ENCODE measurements at regions of chr10 and their contacts with region 1.

Region 1: GRCh38 chr10:63720072-63720537 is 198.9 kb downstream of the REEP3 start:
- DNase-seq: peak; percentile 60 to 85
- H3K4me3 ChIP-seq: no peak overlapping the region
- H3K27ac ChIP-seq: peak overlapping the region in 2 of 5 donors; percentile 43 to 83
- H3K4me1 ChIP-seq: peaks cover 8 to 44% (median 23%) of the 10 kb centered on the region in 4 donors
- H3K27me3 ChIP-seq: no peaks in the 10 kb centered on the region
- CTCF ChIP-seq: peak in 6 of 7 experiments; percentile 66 to 97 (median 96)
- EP300 ChIP-seq: no peak
- POLR2A ChIP-seq: no peak

Region 2: GRCh38 chr10:63166742-63167258 is 553.3 kb before region 1 on chr10:
- intact Hi-C with region 1: loop called (anchors 10 kb)
- DNase-seq: peak in 1 of 2 donors; percentile 92
- H3K4me3 ChIP-seq: no peak overlapping the region
- H3K27ac ChIP-seq: peak overlapping the region in 1 of 5 donors; percentile 47
- H3K4me1 ChIP-seq: peaks cover 0 to 49% (median 27%) of the 10 kb centered on the region in 4 donors
- H3K27me3 ChIP-seq: no peaks in the 10 kb centered on the region
- CTCF ChIP-seq: peak in 5 of 7 experiments; percentile 74 to 85 (median 84)
- EP300 ChIP-seq: no peak
- POLR2A ChIP-seq: no peak

Region 3: GRCh38 chr10:63217120-63217605 is 502.9 kb before region 1 on chr10:
- intact Hi-C with region 1: loop called (anchors 10 kb)
- DNase-seq: peak in 1 of 2 donors; percentile 69
- H3K4me3 ChIP-seq: no peak overlapping the region
- H3K27ac ChIP-seq: peak overlapping the region in 1 of 5 donors; percentile 3
- H3K4me1 ChIP-seq: peaks cover 7 to 53% (median 25%) of the 10 kb centered on the region in 4 donors
- H3K27me3 ChIP-seq: no peaks in the 10 kb centered on the region
- CTCF ChIP-seq: peak in 5 of 7 experiments; percentile 51 to 73 (median 57)
- EP300 ChIP-seq: no peak
- POLR2A ChIP-seq: no peak

Region 4: DNA sequence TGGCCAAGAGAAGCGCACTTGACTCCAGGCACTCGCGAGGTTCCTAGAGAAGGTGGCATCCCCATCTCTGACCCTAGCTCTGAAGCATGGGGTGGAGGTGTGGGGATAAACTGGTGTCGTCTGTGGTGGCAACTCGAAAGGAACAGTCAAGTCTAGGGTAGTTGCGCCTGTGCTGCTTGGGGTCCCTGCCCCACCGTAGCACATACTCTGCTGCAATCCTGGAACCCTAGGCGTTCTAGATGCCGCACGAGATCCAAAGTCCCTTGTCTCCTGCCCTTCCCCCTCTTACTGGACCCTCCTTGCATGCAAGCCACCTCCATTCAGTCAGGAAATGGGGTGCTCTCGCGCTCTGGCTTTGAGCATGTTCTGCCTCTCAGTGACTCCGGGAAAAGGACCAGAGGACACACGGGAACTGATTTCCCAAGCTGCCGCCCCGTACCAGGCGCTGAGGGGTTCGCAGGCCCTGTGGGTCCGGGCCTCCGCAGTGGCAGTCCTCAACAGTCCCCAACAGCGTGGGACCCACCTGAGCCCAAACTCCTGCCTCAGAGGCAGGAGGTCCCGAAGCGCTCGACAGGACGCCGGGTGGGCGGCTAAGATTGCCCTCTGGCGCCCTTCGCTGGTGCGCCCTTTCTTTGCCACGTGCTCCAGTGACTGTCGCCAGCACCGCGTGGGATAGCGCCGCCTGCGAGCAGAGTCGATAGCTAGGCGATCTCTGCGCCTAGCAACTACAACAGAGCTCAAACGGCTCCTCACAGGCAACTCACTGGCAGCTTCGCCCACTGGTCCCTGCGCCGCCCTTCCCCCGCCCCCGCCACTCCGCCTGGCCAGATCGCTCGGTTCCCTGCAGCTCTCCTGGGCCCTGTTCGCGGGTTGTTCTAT is 253.1 kb after region 1 on chr10:
- intact Hi-C with region 1: no loop called
- DNase-seq: no peak
- H3K4me3 ChIP-seq: no peak overlapping the region
- H3K27ac ChIP-seq: no peak overlapping the region
- H3K4me1 ChIP-seq: no peaks in the 10 kb centered on the region
- H3K27me3 ChIP-seq: no peaks in the 10 kb centered on the region
- CTCF ChIP-seq: no peak
- EP300 ChIP-seq: no peak
- POLR2A ChIP-seq: no peak

Measured in stomach (tissue), 19 donors.